GM12878 (cell line): ENCODE measurements at regions of chr2 and their contacts with region 1.

Region 1: GRCh38 chr2:156565066-156565710 is 129.0 kb downstream of the GPD2 start:
- DNase-seq: no peak
- ATAC-seq: peak; percentile 68
- H3K4me3 ChIP-seq: no peak overlapping the region
- H3K27ac ChIP-seq: no peak overlapping the region
- H3K4me1 ChIP-seq: no peaks in the 10 kb centered on the region
- H3K27me3 ChIP-seq: no peaks in the 10 kb centered on the region
- CTCF ChIP-seq: no peak
- EP300 ChIP-seq: no peak
- POLR2A ChIP-seq: no peak
- RAD21 ChIP-seq: no peak

Region 2: DNA sequence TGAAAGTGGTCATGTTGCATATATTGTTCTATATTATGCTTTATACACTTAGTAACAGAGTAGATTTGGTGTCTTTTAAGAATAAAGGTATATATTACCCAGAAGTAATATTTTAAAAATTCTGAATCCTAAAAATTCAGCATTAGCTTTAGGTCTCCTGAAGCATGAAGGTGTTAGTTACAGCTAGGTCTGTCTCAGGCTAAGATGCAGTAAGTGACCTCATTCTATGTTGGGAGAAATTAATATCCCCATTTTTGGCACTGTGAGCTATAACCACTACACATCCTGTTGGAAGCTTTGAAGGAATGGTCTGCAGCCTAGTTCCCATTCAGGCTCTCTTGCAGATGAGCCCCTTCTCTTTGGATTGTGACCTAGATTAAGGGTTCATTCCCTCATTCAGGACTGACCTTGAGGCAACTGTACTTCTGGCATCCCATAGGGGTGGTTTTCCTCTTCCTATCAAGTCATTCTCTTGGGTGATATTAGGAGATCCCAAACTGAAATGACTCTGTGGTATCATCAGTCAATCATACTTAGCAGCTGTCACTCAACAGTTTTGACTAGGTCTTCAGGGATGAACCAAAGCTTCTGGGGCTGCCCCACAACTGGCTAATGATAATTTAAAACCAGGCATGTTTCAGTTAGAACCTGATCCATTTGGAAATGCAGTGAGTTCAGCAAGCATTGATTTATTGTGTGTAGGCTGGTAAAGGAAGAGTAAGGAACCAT is 11.3 kb before region 1 on chr2:
- CTCF ChIA-PET with region 1: interaction called, 8 read pairs
- POLR2A ChIA-PET with region 1: interaction called, 4 read pairs
- RAD21 ChIA-PET with region 1: interaction called, 9 read pairs
- SMC1A ChIA-PET with region 1: interaction called, 68 read pairs
- in situ Hi-C with region 1: no loop called
- intact Hi-C with region 1: no loop called
- DNase-seq: no peak
- ATAC-seq: peak; percentile 49; the same call in 2 of the 3 replicates
- H3K4me3 ChIP-seq: no peak overlapping the region
- H3K27ac ChIP-seq: no peak overlapping the region
- H3K4me1 ChIP-seq: no peaks in the 10 kb centered on the region
- H3K27me3 ChIP-seq: no peaks in the 10 kb centered on the region
- CTCF ChIP-seq: no peak
- EP300 ChIP-seq: no peak
- POLR2A ChIP-seq: no peak
- RAD21 ChIP-seq: no peak

Region 3: DNA sequence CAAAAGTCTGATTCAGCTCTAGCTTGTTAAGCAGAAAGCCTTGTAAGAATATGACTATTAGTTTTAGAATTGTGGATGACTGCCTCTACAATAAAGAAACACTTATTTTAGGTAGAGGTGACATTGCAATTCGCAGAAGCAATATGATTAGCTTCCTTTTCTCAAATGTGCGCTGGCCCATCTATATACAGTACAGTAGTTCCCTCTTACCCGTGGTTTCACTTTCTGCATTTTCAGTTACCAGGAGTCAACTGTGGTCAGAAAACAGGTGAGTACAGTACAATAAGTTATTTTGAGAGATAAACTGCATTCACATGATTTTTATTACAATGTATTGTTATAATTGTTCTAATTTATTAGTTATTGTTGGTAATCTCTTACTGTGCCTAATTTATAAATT is 276.1 kb after region 1 on chr2:
- CTCF ChIA-PET with region 1: no interaction called
- POLR2A ChIA-PET with region 1: no interaction called
- RAD21 ChIA-PET with region 1: no interaction called
- SMC1A ChIA-PET with region 1: no interaction called
- in situ Hi-C with region 1: no loop called
- intact Hi-C with region 1: no loop called
- DNase-seq: no peak
- ATAC-seq: peak; percentile 61
- H3K4me3 ChIP-seq: no peak overlapping the region
- H3K27ac ChIP-seq: no peak overlapping the region
- H3K4me1 ChIP-seq: no peaks in the 10 kb centered on the region
- H3K27me3 ChIP-seq: no peaks in the 10 kb centered on the region
- CTCF ChIP-seq: no peak
- EP300 ChIP-seq: no peak
- POLR2A ChIP-seq: no peak
- RAD21 ChIP-seq: no peak